Activated CD4-positive, alpha-beta memory T cell treated with anti-CD3 and anti-CD28 coated beads for 36 hours (primary cell): ENCODE measurements at regions of chr12 and their contacts with region 1.

Region 1: DNA sequence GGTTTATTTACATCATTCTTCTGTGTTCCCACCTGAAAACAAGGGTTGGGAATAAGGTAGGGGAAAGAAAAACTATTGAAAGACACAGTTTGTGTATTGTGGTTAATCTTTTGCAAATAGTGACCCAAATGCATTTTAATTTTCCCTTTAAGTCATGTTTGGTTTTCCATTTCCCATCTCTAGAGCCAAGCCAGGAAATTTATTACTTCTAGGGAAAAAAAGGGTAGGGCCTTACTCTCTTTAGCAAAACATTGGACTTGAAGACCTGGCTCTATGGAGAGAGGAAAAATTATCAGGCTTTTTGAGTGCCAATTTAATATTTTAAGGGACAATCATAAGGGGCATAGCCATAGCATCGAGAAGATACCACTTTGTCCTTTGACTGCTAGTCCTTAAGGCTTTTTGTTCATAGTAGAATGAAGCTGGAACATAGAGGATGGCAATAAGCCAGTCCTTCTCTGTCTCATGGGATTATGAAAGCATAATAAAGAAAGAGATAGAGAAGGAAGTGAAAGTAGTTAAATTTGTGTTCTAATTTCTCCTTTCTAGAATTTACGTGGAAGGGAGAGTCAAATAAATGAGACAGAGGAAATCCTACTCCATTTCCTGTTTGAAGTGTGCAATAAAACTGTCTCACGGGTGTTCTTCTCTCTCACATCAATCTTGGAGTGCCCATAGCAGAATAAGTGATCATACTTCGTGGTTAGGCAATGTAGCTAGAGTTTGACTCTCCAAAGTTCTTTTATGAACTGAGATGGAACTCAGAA is 50.9 kb upstream of the PPFIA2 start:
- DNase-seq: no peak
- H3K4me3 Mint-ChIP-seq: no peak overlapping the region
- H3K27ac Mint-ChIP-seq: no peak overlapping the region
- H3K4me1 Mint-ChIP-seq: peaks cover 9% of the 10 kb centered on the region
- H3K27me3 Mint-ChIP-seq: peaks cover 3% of the 10 kb centered on the region

Region 2: GRCh38 chr12:81797100-81797499 is 12.9 kb before region 1 on chr12:
- CTCF ChIA-PET with region 1: no interaction called
- POLR2A ChIA-PET with region 1: no interaction called
- intact Hi-C with region 1: loop called (anchors 1 kb)
- DNase-seq: no peak
- H3K4me3 Mint-ChIP-seq: no peak overlapping the region
- H3K27ac Mint-ChIP-seq: no peak overlapping the region
- H3K4me1 Mint-ChIP-seq: peaks cover 8% of the 10 kb centered on the region
- H3K27me3 Mint-ChIP-seq: peaks cover 2% of the 10 kb centered on the region